ENCODE measurements at regions of chr3 and their contacts with region 1.

Region 1: GRCh38 chr3:157136647-157137387 is 23.1 kb downstream of the CCNL1 start:
- DNase-seq: no peak
- ATAC-seq: peak; percentile 16
- H3K4me3 ChIP-seq: no peak overlapping the region
- H3K4me3 Mint-ChIP-seq: no peak overlapping the region
- H3K27ac ChIP-seq: peak overlapping the region in 1 of 2 experiments; percentile 13
- H3K27ac Mint-ChIP-seq: peak overlapping the region; percentile 74
- H3K4me1 ChIP-seq: peaks cover 17% of the 10 kb centered on the region
- H3K4me1 Mint-ChIP-seq: peaks cover 37% of the 10 kb centered on the region
- H3K27me3 ChIP-seq: no peaks in the 10 kb centered on the region
- H3K27me3 Mint-ChIP-seq: no peaks in the 10 kb centered on the region
- CTCF ChIP-seq: no peak

Region 2: DNA sequence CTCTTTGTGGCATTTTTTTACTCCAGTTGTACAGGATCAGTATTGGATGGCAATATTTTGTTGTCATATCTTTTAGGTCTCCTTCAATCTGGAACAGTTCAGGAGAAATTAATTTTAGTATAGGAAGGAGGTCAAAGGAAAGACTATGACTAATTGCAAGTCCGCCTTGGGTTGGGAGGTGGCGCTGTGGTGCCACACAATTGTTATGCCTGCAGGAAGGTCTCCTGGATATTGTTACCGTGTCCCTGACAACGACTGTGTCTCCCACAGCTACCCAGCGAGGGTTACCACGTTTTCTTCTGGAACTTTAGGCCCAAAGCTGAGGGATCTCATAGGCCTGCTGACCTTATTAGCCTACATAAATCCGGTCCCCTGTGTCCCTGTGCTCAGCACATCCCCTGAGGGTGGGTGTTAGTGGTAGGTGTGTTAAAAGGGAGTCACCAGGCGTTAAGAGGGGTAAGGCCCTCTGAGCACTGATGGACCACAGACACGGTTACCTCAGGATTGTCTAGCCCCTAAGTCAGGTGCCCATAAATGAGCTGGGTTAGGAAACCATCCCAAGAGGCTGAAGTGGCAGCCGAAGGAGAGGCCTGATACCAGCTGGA is 984.9 kb before region 1 on chr3:
- CTCF ChIA-PET with region 1: interaction called, 24 read pairs
- POLR2A ChIA-PET with region 1: no interaction called
- intact Hi-C with region 1: loop called (anchors 1 to 2 kb)
- DNase-seq: peak in 8 of 9 experiments; percentile 25 to 66 (median 54)
- ATAC-seq: peak; percentile 56
- H3K4me3 ChIP-seq: no peak overlapping the region
- H3K4me3 Mint-ChIP-seq: no peak overlapping the region
- H3K27ac ChIP-seq: no peak overlapping the region
- H3K27ac Mint-ChIP-seq: no peak overlapping the region
- H3K4me1 ChIP-seq: no peaks in the 10 kb centered on the region
- H3K4me1 Mint-ChIP-seq: peaks cover 3% of the 10 kb centered on the region
- H3K27me3 ChIP-seq: no peaks in the 10 kb centered on the region
- H3K27me3 Mint-ChIP-seq: peaks cover 5% of the 10 kb centered on the region
- CTCF ChIP-seq: peak; percentile 73

Region 3: GRCh38 chr3:156536524-156537231 is 600.1 kb before region 1 on chr3:
- CTCF ChIA-PET with region 1: interaction called, 12 read pairs
- POLR2A ChIA-PET with region 1: no interaction called
- intact Hi-C with region 1: loop called (anchors 2 to 5 kb)
- DNase-seq: no peak
- ATAC-seq: no peak
- H3K4me3 ChIP-seq: no peak overlapping the region
- H3K4me3 Mint-ChIP-seq: no peak overlapping the region
- H3K27ac ChIP-seq: no peak overlapping the region
- H3K27ac Mint-ChIP-seq: no peak overlapping the region
- H3K4me1 ChIP-seq: no peaks in the 10 kb centered on the region
- H3K4me1 Mint-ChIP-seq: no peaks in the 10 kb centered on the region
- H3K27me3 ChIP-seq: no peaks in the 10 kb centered on the region
- H3K27me3 Mint-ChIP-seq: no peaks in the 10 kb centered on the region
- CTCF ChIP-seq: no peak

Region 4: GRCh38 chr3:156674046-156674910 is 462.5 kb before region 1 on chr3 and contains the start of gene TIPARP:
- CTCF ChIA-PET with region 1: interaction called, 8 read pairs
- POLR2A ChIA-PET with region 1: interaction called, 5 read pairs
- intact Hi-C with region 1: loop called in 1 of 2 experiments (anchors 1 kb)
- DNase-seq: peak; percentile 98 to 100 (median 99)
- ATAC-seq: peak; percentile 82
- H3K4me3 ChIP-seq: peak within 1 kb of the TSS; percentile 84 to 95
- H3K4me3 Mint-ChIP-seq: peak within 1 kb of the TSS; percentile 97
- H3K27ac ChIP-seq: peak within 1 kb of the TSS; percentile 79 to 89
- H3K27ac Mint-ChIP-seq: peak within 1 kb of the TSS; percentile 99
- H3K4me1 ChIP-seq: peaks cover 34% of the 10 kb centered on the region
- H3K4me1 Mint-ChIP-seq: peaks cover 47% of the 10 kb centered on the region
- H3K27me3 ChIP-seq: no peaks in the 10 kb centered on the region
- H3K27me3 Mint-ChIP-seq: no peaks in the 10 kb centered on the region
- CTCF ChIP-seq: peak; percentile 36
- total RNA-seq, gene TIPARP: 265 to 268 TPM

Region 5: DNA sequence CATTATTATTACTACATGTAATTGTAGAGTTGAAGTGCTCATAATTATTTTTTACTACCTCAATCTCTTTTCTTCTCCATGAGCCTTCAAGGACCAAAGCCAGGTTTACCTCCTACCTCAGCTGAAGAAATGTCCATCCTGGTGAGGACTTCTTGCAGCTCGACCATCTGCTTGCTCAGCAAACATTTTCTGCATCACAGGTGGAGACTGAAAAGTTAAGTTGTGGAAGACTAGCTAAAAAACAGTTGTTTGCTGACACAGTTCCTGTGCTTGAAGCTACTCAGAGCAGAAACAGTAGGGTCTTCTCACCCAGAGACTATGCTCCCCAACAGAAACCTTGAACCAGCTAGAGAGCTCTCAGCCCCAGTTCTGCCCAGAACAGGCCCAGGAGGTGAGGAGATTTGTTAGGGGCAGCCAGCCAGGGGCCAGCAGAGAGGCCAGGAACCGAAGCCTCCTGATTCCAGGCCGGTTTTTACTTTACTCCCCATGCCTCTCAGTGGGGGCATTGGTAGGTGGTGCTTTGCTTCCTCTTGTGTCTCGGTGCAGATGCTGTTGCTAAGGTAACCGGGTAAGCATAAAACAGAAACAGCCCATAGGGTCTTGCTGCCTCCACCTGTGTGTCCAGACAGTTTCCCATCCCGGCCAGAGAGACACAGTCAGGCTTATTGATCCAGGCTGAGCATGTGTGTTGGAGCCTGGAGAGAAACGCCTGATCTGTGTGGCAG is 31.7 kb before region 1 on chr3:
- CTCF ChIA-PET with region 1: interaction called, 25 read pairs
- POLR2A ChIA-PET with region 1: no interaction called
- intact Hi-C with region 1: no loop called
- DNase-seq: peak in 2 of 9 experiments; percentile 47 to 66
- ATAC-seq: no peak
- H3K4me3 ChIP-seq: no peak overlapping the region
- H3K4me3 Mint-ChIP-seq: no peak overlapping the region
- H3K27ac ChIP-seq: no peak overlapping the region
- H3K27ac Mint-ChIP-seq: peak overlapping the region; percentile 16
- H3K4me1 ChIP-seq: no peaks in the 10 kb centered on the region
- H3K4me1 Mint-ChIP-seq: peaks cover 13% of the 10 kb centered on the region
- H3K27me3 ChIP-seq: no peaks in the 10 kb centered on the region
- H3K27me3 Mint-ChIP-seq: no peaks in the 10 kb centered on the region
- CTCF ChIP-seq: no peak

Region 6: DNA sequence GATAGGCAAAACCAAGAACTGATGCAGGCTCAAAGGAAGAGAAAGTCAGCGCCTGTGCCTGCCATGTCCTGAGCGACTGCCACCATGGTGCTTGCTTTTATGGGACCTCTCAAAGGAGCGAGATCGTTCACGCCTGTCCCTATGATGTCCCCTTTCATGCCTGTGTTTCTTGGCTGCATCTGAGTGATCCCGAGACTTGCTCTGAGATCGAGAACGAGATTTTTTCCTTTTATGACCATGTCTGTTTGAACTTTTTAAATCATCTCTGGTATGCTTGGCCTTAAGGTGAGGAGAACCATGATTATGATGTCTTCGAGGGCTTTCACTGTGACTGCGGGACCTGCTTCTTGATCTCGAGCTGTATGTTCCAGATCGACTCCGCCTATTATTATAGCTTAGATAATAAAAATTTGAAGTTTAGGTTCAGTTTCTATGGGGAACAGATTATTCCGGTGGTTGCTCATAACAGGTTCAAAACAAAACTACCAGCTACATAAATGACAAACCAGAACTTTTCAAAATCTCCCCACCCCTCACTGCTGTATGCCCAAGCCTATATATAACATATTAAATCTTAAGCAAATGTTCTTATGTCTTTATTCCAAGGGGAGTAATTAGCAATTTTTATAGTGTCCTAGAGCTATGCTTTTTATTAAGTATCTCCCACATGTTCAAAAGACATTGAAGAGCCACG is 11.5 kb after region 1 on chr3:
- CTCF ChIA-PET with region 1: interaction called, 30 read pairs
- POLR2A ChIA-PET with region 1: interaction called, 6 read pairs
- intact Hi-C with region 1: no loop called
- DNase-seq: peak in 1 of 9 experiments; percentile 33
- ATAC-seq: peak; percentile 17
- H3K4me3 ChIP-seq: no peak overlapping the region
- H3K4me3 Mint-ChIP-seq: no peak overlapping the region
- H3K27ac ChIP-seq: no peak overlapping the region
- H3K27ac Mint-ChIP-seq: peak overlapping the region; percentile 20
- H3K4me1 ChIP-seq: peaks cover 4% of the 10 kb centered on the region
- H3K4me1 Mint-ChIP-seq: peaks cover 41% of the 10 kb centered on the region
- H3K27me3 ChIP-seq: no peaks in the 10 kb centered on the region
- H3K27me3 Mint-ChIP-seq: no peaks in the 10 kb centered on the region
- CTCF ChIP-seq: no peak

Region 7: DNA sequence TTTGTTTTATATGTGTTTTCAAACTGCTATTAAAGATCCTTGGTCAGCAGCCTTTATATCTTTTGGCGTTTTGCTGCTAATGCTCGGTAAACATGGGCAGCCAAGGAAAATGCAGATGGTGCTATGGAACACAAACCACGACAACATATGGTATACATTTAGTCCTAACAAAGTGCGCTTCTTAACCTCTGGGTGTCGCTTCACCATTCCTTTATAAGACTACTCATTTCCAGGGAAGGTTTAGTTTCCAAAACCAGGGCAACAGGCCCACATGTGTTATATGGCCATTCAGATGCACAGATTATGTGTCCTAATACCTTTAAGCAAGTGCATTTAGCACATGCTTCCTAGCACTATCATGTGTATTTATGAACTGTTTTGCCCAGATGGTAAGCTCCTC is 954.7 kb after region 1 on chr3:
- CTCF ChIA-PET with region 1: no interaction called
- POLR2A ChIA-PET with region 1: no interaction called
- intact Hi-C with region 1: no loop called
- DNase-seq: no peak
- ATAC-seq: no peak
- H3K4me3 ChIP-seq: no peak overlapping the region
- H3K4me3 Mint-ChIP-seq: no peak overlapping the region
- H3K27ac ChIP-seq: no peak overlapping the region
- H3K27ac Mint-ChIP-seq: no peak overlapping the region
- H3K4me1 ChIP-seq: no peaks in the 10 kb centered on the region
- H3K4me1 Mint-ChIP-seq: no peaks in the 10 kb centered on the region
- H3K27me3 ChIP-seq: peaks cover 22 to 33% of the 10 kb centered on the region in 2 experiments
- H3K27me3 Mint-ChIP-seq: peaks cover 74% of the 10 kb centered on the region
- CTCF ChIP-seq: no peak

Measured in CD8-positive, alpha-beta T cell (primary cell).